CD8-positive, alpha-beta T cell (primary cell): ENCODE measurements at regions of chr9 and their contacts with region 1.

Region 1: DNA sequence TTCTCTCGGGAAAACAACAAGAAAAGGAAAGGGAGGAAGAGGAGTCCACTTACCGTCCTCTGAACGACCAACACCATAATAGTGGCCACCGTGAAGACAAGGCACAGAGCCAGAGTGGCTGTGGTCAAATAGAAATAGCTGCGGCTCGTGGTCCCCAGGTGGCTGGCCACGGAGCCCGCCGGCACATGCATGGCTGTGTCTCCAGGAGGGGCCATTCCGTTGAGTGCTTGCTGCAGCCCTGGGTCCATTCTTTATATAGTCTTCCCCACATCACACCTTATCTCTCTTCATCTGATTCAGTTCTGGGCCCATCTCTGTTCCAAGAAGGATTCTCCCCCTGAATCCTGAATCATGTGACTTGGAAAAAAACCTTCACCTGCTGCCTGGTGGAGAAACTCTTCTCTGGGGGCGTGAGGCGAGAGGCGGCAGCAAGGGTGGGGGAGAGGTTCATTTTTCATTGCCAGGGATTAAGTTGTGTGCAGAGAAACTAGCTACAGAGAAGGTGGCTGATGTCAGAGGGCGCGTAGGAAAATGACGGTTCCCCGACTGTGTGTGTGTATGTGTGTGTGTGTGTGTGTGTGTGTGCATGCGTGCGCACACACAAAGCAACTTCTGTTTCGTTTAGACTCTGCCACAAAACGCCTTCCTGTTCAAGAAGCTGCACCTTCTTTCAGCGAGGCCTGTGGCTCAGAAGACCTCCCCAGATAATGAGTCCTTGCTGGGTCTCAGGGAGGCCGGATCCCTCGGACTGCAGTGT is at the start of gene TNFSF8:
- DNase-seq: peak; percentile 30 to 91 (median 76)
- ATAC-seq: peak; percentile 82
- H3K4me3 ChIP-seq: peak within 1 kb of the TSS; percentile 65 to 81
- H3K4me3 Mint-ChIP-seq: peak within 1 kb of the TSS; percentile 99
- H3K27ac ChIP-seq: peak within 1 kb of the TSS; percentile 74 to 82
- H3K27ac Mint-ChIP-seq: peak within 1 kb of the TSS; percentile 99
- H3K4me1 ChIP-seq: peaks cover 35% of the 10 kb centered on the region
- H3K4me1 Mint-ChIP-seq: peaks cover 56% of the 10 kb centered on the region
- H3K27me3 ChIP-seq: no peaks in the 10 kb centered on the region
- H3K27me3 Mint-ChIP-seq: no peaks in the 10 kb centered on the region
- CTCF ChIP-seq: no peak
- total RNA-seq, gene TNFSF8: 47.7 to 49.3 TPM

Region 2: DNA sequence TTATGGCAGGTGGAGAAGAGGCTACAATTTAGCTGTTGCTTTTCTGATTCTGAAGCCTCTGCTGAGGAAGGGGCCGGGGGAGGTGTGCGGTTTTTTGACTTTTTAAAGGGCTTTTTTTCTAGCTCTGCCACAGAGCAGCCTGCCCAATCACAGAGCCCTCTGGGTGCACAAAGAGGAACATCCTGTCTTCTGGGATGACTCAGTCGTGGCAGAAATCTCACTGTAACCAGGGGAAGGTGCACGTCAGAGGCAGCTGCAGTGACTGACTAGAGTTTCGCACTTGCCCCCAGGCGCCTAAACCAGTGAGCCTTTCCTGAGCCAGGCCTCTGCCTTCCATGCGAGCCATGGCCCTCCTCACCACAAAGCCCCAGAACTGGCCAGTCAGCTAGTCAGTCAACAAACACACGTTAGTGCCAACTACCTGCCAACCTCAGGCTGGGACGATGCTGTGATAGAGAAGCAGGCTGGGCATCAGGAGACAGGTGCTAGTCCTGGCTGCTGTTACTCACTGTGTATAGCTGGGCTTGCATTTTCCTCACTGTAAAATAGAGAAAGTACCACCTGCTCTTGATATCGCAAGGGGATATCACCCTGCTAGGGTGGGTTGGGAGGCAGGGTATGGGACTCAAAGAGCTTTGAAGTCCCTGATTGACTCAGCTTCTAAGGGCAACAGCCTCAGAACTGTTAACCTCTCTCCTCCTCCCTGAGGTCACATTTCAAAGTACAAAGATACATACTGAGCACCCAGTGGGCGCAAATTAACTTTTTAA is 544.6 kb before region 1 on chr9:
- CTCF ChIA-PET with region 1: no interaction called
- POLR2A ChIA-PET with region 1: interaction called, 3 read pairs
- intact Hi-C with region 1: loop called in 1 of 2 experiments (anchors 10 kb)
- DNase-seq: peak; percentile 76 to 98 (median 89)
- ATAC-seq: peak; percentile 70
- H3K4me3 ChIP-seq: peak overlapping the region; percentile 89 to 95
- H3K4me3 Mint-ChIP-seq: peak overlapping the region; percentile 99
- H3K27ac ChIP-seq: peak overlapping the region; percentile 90 to 93
- H3K27ac Mint-ChIP-seq: peak overlapping the region; percentile 95
- H3K4me1 ChIP-seq: peaks cover 72% of the 10 kb centered on the region
- H3K4me1 Mint-ChIP-seq: peaks cover 75% of the 10 kb centered on the region
- H3K27me3 ChIP-seq: no peaks in the 10 kb centered on the region
- H3K27me3 Mint-ChIP-seq: no peaks in the 10 kb centered on the region
- CTCF ChIP-seq: no peak

Region 3: GRCh38 chr9:114894801-114895433 is 35.3 kb before region 1 on chr9:
- CTCF ChIA-PET with region 1: interaction called, 12 read pairs
- POLR2A ChIA-PET with region 1: interaction called, 50 read pairs
- intact Hi-C with region 1: loop called (anchors 1 to 2 kb)
- DNase-seq: no peak
- ATAC-seq: no peak
- H3K4me3 ChIP-seq: no peak overlapping the region
- H3K4me3 Mint-ChIP-seq: peak overlapping the region; percentile 26
- H3K27ac ChIP-seq: peak overlapping the region in 1 of 2 experiments; percentile 1
- H3K27ac Mint-ChIP-seq: peak overlapping the region; percentile 37
- H3K4me1 ChIP-seq: peaks cover 64% of the 10 kb centered on the region
- H3K4me1 Mint-ChIP-seq: peaks cover 49% of the 10 kb centered on the region
- H3K27me3 ChIP-seq: no peaks in the 10 kb centered on the region
- H3K27me3 Mint-ChIP-seq: no peaks in the 10 kb centered on the region
- CTCF ChIP-seq: no peak

Region 4: GRCh38 chr9:114919611-114920010 is 10.6 kb before region 1 on chr9:
- CTCF ChIA-PET with region 1: interaction called, 5 read pairs
- POLR2A ChIA-PET with region 1: interaction called, 34 read pairs
- intact Hi-C with region 1: loop called in 1 of 2 experiments (anchors 1 kb)
- DNase-seq: no peak
- ATAC-seq: no peak
- H3K4me3 ChIP-seq: no peak overlapping the region
- H3K4me3 Mint-ChIP-seq: peak overlapping the region; percentile 9
- H3K27ac ChIP-seq: peak overlapping the region in 1 of 2 experiments; percentile 15
- H3K27ac Mint-ChIP-seq: peak overlapping the region; percentile 89
- H3K4me1 ChIP-seq: peaks cover 59% of the 10 kb centered on the region
- H3K4me1 Mint-ChIP-seq: peaks cover 90% of the 10 kb centered on the region
- H3K27me3 ChIP-seq: no peaks in the 10 kb centered on the region
- H3K27me3 Mint-ChIP-seq: no peaks in the 10 kb centered on the region
- CTCF ChIP-seq: no peak

Region 5: GRCh38 chr9:115013998-115014397 is 83.8 kb after region 1 on chr9:
- CTCF ChIA-PET with region 1: interaction called, 7 read pairs
- POLR2A ChIA-PET with region 1: interaction called, 4 read pairs
- intact Hi-C with region 1: loop called in 1 of 2 experiments (anchors 5 kb)
- DNase-seq: peak; percentile 60 to 86 (median 79)
- ATAC-seq: peak; percentile 79
- H3K4me3 ChIP-seq: no peak overlapping the region
- H3K4me3 Mint-ChIP-seq: no peak overlapping the region
- H3K27ac ChIP-seq: no peak overlapping the region
- H3K27ac Mint-ChIP-seq: no peak overlapping the region
- H3K4me1 ChIP-seq: peaks cover 7% of the 10 kb centered on the region
- H3K4me1 Mint-ChIP-seq: peaks cover 9% of the 10 kb centered on the region
- H3K27me3 ChIP-seq: no peaks in the 10 kb centered on the region
- H3K27me3 Mint-ChIP-seq: no peaks in the 10 kb centered on the region
- CTCF ChIP-seq: peak; percentile 89